Sigmoid colon (tissue), 7 donors: ENCODE measurements at regions of chr9 and their contacts with region 1.

Region 1: GRCh38 chr9:6008169-6008979 is 7.0 kb downstream of the RANBP6 start:
- DNase-seq: peak; percentile 99
- H3K4me3 ChIP-seq: peak overlapping the region; percentile 89 to 98 (median 95)
- H3K27ac ChIP-seq: peak overlapping the region; percentile 99 to 100 (median 99)
- H3K4me1 ChIP-seq: peaks cover 0 to 56% (median 36%) of the 10 kb centered on the region in 4 donors
- H3K27me3 ChIP-seq: no peaks in the 10 kb centered on the region
- CTCF ChIP-seq: no peak
- EP300 ChIP-seq: no peak
- POLR2A ChIP-seq: peak in 1 of 2 donors; percentile 39

Region 2: GRCh38 chr9:5437254-5438216 is 570.8 kb before region 1 on chr9 and contains the start of gene PLGRKT:
- intact Hi-C with region 1: loop called (anchors 5 kb)
- DNase-seq: peak; percentile 98
- H3K4me3 ChIP-seq: peak within 1 kb of the TSS; percentile 49 to 71 (median 70)
- H3K27ac ChIP-seq: peak within 1 kb of the TSS; percentile 84 to 94 (median 92)
- H3K4me1 ChIP-seq: peaks cover 0 to 16% (median 15%) of the 10 kb centered on the region in 4 donors
- H3K27me3 ChIP-seq: no peaks in the 10 kb centered on the region
- CTCF ChIP-seq: peak in 1 of 4 experiments; percentile 10
- EP300 ChIP-seq: no peak
- POLR2A ChIP-seq: peak; percentile 80 to 89
- total RNA-seq, gene PLGRKT: 14.1 to 25.0 (median 19.7) TPM

Region 3: GRCh38 chr9:5953743-5954707 is 54.3 kb before region 1 on chr9:
- intact Hi-C with region 1: loop called (anchors 10 kb)
- DNase-seq: no peak
- H3K4me3 ChIP-seq: no peak overlapping the region
- H3K27ac ChIP-seq: no peak overlapping the region
- H3K4me1 ChIP-seq: peaks cover 0 to 21% (median 7%) of the 10 kb centered on the region in 4 donors
- H3K27me3 ChIP-seq: no peaks in the 10 kb centered on the region
- CTCF ChIP-seq: no peak
- EP300 ChIP-seq: no peak
- POLR2A ChIP-seq: no peak

Region 4: DNA sequence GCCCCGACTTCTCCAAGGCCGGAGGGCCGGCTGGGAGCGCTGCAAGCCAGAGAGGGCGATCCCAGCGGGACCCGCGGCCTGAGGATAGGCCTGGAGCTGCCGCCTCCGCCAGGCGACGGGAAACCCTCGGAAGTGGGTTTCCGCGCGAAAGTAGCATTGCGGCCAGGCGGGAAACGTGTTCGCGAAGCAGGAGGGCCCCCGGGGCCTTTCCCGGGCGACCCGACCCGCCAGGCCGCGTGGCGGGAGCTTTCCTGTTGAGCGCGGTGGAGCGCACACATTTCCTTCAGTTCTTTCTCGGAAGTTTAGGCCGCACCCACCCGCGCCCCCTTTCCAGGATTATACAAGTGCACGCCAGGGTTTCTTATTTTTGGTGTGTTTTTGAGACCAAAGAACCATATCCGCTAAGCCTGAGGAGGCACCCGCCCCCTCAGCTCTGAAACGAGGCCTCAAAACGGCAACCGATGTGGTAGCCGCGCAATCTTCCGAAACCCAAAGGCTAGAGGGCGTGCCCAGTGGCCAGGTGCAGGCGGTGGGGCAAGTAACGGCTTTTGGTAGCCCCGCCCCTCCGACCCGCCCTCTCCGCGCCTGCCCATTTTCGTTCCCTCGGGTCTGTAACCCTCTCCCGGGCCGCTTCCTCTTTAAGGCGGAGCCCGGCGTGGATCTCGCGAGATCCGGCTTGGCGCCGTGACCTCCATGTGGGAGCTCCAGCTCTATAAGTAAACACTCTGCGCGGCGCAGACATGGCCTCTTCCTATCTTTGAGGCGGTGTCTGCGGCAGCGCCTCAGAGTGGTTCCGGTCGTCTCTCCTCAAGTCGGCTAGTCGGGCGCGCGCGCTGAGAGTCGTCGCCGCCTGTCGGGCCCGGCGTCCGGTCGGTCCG is 404.4 kb after region 1 on chr9 and contains the start of gene UHRF2:
- intact Hi-C with region 1: loop called (anchors 10 kb)
- DNase-seq: peak; percentile 99
- H3K4me3 ChIP-seq: peak within 1 kb of the TSS; percentile 79 to 99 (median 88)
- H3K27ac ChIP-seq: peak within 1 kb of the TSS; percentile 86 to 90 (median 90)
- H3K4me1 ChIP-seq: peaks cover 0 to 43% (median 28%) of the 10 kb centered on the region in 4 donors
- H3K27me3 ChIP-seq: no peaks in the 10 kb centered on the region
- CTCF ChIP-seq: no peak
- EP300 ChIP-seq: no peak
- POLR2A ChIP-seq: peak; percentile 45 to 46
- total RNA-seq, gene UHRF2: 49.1 to 55.6 (median 53.6) TPM

Region 5: GRCh38 chr9:6757456-6758247 is 749.3 kb after region 1 on chr9 and contains the start of gene KDM4C:
- intact Hi-C with region 1: loop called (anchors 5 kb)
- DNase-seq: peak; percentile 98
- H3K4me3 ChIP-seq: peak within 1 kb of the TSS; percentile 74 to 99 (median 89)
- H3K27ac ChIP-seq: peak within 1 kb of the TSS; percentile 95 to 99 (median 98)
- H3K4me1 ChIP-seq: peaks cover 0 to 19% (median 10%) of the 10 kb centered on the region in 4 donors
- H3K27me3 ChIP-seq: no peaks in the 10 kb centered on the region
- CTCF ChIP-seq: no peak
- EP300 ChIP-seq: peak in 2 of 4 donors; percentile 36 to 64
- POLR2A ChIP-seq: peak; percentile 74 to 88
- total RNA-seq, gene KDM4C: 28.8 to 33.5 (median 29.8) TPM